Mammary epithelial cell (primary cell): ENCODE measurements at regions of chr19 and their contacts with region 1.

Region 1: GRCh38 chr19:23436318-23436717 is 41.0 kb upstream of the ZNF91 start:
- DNase-seq: no peak
- H3K4me3 ChIP-seq: no peak overlapping the region
- H3K27ac ChIP-seq: no peak overlapping the region
- H3K4me1 ChIP-seq: no peaks in the 10 kb centered on the region
- H3K27me3 ChIP-seq: no peaks in the 10 kb centered on the region
- CTCF ChIP-seq: peak; percentile 41 to 42

Region 2: GRCh38 chr19:23527797-23528196 is 91.5 kb after region 1 on chr19:
- CTCF ChIA-PET with region 1: no interaction called
- dilution Hi-C with region 1: no loop called
- in situ Hi-C with region 1: no loop called
- intact Hi-C with region 1: no loop called
- DNase-seq: peak; percentile 35
- H3K4me3 ChIP-seq: no peak overlapping the region
- H3K27ac ChIP-seq: no peak overlapping the region
- H3K4me1 ChIP-seq: peaks cover 5% of the 10 kb centered on the region
- H3K27me3 ChIP-seq: no peaks in the 10 kb centered on the region
- CTCF ChIP-seq: no peak

Region 3: GRCh38 chr19:23758187-23759074 is 322.1 kb after region 1 on chr19 and contains the start of gene ZNF681:
- CTCF ChIA-PET with region 1: no interaction called
- dilution Hi-C with region 1: no loop called
- in situ Hi-C with region 1: no loop called
- intact Hi-C with region 1: loop called (anchors 5 kb)
- DNase-seq: peak; percentile 85
- H3K4me3 ChIP-seq: peak within 1 kb of the TSS; percentile 47 to 61 (median 55)
- H3K27ac ChIP-seq: peak within 1 kb of the TSS; percentile 7
- H3K4me1 ChIP-seq: no peaks in the 10 kb centered on the region
- H3K27me3 ChIP-seq: no peaks in the 10 kb centered on the region
- CTCF ChIP-seq: peak in 1 of 2 donors; percentile 13
- total RNA-seq, gene ZNF681: 1.3 to 2.3 TPM